Activated CD4-positive, alpha-beta T cell treated with anti-CD3 and anti-CD28 coated beads for 36 hours (primary cell): ENCODE measurements at regions of chr6 and their contacts with region 1.

Region 1: DNA sequence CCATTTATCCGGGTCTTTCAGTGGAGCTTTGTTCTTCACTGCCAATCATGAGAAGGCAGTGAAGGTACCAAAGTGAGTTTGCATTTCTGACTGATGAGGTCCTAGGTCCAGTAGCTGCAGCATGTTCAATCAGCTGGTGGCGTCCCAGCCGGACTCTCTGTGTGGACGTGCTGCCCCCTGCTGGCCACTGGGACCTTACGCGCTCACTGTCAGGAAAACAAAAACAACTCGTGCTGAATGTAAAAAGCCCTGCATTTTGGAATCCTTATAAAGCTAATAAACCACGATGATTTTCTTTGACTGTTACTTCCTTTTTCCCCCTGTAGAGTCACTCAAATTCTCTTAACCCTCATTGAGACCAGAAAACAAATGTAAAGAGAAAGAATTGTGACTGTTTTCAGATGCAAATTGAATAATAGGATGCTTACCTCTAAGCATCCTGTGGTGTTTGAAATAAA is 4.9 kb upstream of the CD24 start:
- DNase-seq: peak; percentile 91
- ATAC-seq: peak; percentile 60
- H3K4me3 Mint-ChIP-seq: no peak overlapping the region
- H3K27ac Mint-ChIP-seq: no peak overlapping the region
- H3K4me1 Mint-ChIP-seq: peaks cover 5% of the 10 kb centered on the region
- H3K27me3 Mint-ChIP-seq: peaks cover 29% of the 10 kb centered on the region

Region 2: DNA sequence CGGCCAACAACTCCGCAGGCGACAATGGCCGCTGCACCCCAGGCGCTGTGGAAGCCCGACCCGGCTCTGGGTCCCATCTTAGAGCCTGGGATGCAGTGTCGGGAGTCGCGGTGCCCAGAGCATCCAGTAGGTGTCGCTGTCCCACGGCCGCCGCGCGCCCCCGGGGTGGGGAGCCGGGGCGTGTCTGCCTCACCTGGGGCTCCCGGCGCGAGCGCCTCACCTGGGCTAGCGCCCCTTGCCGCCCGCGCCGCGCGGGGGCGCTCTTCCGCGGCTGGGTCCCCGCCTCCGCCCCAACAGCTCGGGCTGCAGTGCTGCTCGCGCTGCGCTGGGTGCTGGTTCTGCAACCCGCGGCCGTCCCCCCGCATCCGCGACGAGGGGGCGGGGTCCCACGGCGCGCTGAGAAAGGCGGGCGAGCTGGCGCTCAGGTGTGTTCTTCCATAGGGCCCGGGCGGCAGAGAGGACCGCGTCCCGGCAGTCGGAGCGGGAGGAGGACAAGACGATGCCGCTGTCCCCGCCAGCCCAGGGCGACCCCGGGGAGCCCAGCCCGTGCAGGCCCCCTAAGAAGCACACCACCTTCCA is 619.0 kb before region 1 on chr6 and contains the start of gene CRYBG1:
- CTCF ChIA-PET with region 1: interaction called, 6 read pairs
- POLR2A ChIA-PET with region 1: no interaction called
- intact Hi-C with region 1: loop called in 1 of 2 experiments (anchors 10 kb)
- DNase-seq: peak; percentile 84
- ATAC-seq: peak; percentile 94
- H3K4me3 Mint-ChIP-seq: peak within 1 kb of the TSS; percentile 69
- H3K27ac Mint-ChIP-seq: peak within 1 kb of the TSS; percentile 19
- H3K4me1 Mint-ChIP-seq: peaks cover 11% of the 10 kb centered on the region
- H3K27me3 Mint-ChIP-seq: peaks cover 44% of the 10 kb centered on the region
- total RNA-seq, gene CRYBG1: 26.2 to 26.6 TPM

Region 3: GRCh38 chr6:106568530-106568929 is 410.9 kb before region 1 on chr6:
- CTCF ChIA-PET with region 1: interaction called, 3 read pairs
- POLR2A ChIA-PET with region 1: no interaction called
- intact Hi-C with region 1: loop called (anchors 2 to 5 kb)
- DNase-seq: no peak
- ATAC-seq: peak; percentile 27
- H3K4me3 Mint-ChIP-seq: no peak overlapping the region
- H3K27ac Mint-ChIP-seq: peak overlapping the region; percentile 62
- H3K4me1 Mint-ChIP-seq: peaks cover 11% of the 10 kb centered on the region
- H3K27me3 Mint-ChIP-seq: no peaks in the 10 kb centered on the region

Region 4: GRCh38 chr6:106608062-106608668 is 371.3 kb before region 1 on chr6:
- CTCF ChIA-PET with region 1: interaction called, 10 read pairs
- POLR2A ChIA-PET with region 1: no interaction called
- intact Hi-C with region 1: loop called (anchors 1 kb)
- DNase-seq: peak; percentile 19
- ATAC-seq: peak; percentile 86
- H3K4me3 Mint-ChIP-seq: no peak overlapping the region
- H3K27ac Mint-ChIP-seq: no peak overlapping the region
- H3K4me1 Mint-ChIP-seq: peaks cover 8% of the 10 kb centered on the region
- H3K27me3 Mint-ChIP-seq: no peaks in the 10 kb centered on the region

Region 5: GRCh38 chr6:106918115-106918514 is 61.3 kb before region 1 on chr6:
- CTCF ChIA-PET with region 1: no interaction called
- POLR2A ChIA-PET with region 1: no interaction called
- intact Hi-C with region 1: no loop called
- DNase-seq: no peak
- ATAC-seq: no peak
- H3K4me3 Mint-ChIP-seq: no peak overlapping the region
- H3K27ac Mint-ChIP-seq: no peak overlapping the region
- H3K4me1 Mint-ChIP-seq: peaks cover 4% of the 10 kb centered on the region
- H3K27me3 Mint-ChIP-seq: peaks cover 16% of the 10 kb centered on the region

Region 6: GRCh38 chr6:106997390-106998158 is 18.1 kb after region 1 on chr6:
- CTCF ChIA-PET with region 1: interaction called, 11 read pairs
- POLR2A ChIA-PET with region 1: no interaction called
- intact Hi-C with region 1: no loop called
- DNase-seq: peak; percentile 80
- ATAC-seq: peak; percentile 63
- H3K4me3 Mint-ChIP-seq: no peak overlapping the region
- H3K27ac Mint-ChIP-seq: no peak overlapping the region
- H3K4me1 Mint-ChIP-seq: no peaks in the 10 kb centered on the region
- H3K27me3 Mint-ChIP-seq: peaks cover under 1% of the 10 kb centered on the region